Thyroid gland (tissue), 4 donors: ENCODE measurements at regions of chr16 and their contacts with region 1.

Region 1: GRCh38 chr16:48623304-48624016 is 13.5 kb upstream of the N4BP1 start:
- DNase-seq: peak; percentile 83 to 85
- H3K4me3 ChIP-seq: peak overlapping the region in 1 of 3 donors; percentile 19
- H3K27ac ChIP-seq: peak overlapping the region in 2 of 3 donors; percentile 63 to 76
- H3K4me1 ChIP-seq: peaks cover 5 to 15% of the 10 kb centered on the region in 2 donors
- H3K27me3 ChIP-seq: no peaks in the 10 kb centered on the region
- CTCF ChIP-seq: peak; percentile 87 to 100 (median 98)
- POLR2A ChIP-seq: peak in 1 of 2 donors; percentile 17

Region 2: DNA sequence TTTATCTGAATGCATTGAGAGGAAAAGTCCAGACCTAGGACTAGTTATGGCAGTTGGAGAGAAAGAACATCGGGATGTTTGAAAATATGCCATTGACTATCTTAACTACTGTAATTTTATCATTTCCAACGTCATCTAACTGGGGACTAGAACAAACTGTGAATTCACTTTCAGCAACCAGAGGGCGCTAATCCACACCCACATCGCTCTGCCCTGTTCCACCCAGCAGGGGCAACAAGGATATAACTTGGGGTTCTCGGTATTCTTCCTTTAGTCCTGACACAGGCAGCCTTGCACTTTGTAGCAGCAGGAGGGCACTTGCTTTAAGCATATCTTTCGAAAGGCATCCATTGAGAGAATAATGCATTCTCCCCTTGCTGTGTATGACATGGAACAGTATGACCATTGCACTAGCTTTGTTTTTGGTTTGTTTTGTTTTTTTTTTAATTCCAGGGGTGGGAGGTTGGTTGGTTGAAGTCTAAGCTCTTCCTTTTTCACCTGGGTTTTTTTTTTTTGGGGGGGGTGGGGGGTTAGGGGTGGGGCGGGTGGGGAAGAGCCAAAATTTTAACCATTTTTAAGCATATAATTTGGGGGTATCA is 269.8 kb before region 1 on chr16:
- intact Hi-C with region 1: loop called (anchors 5 kb)
- DNase-seq: peak; percentile 47 to 50
- H3K4me3 ChIP-seq: no peak overlapping the region
- H3K27ac ChIP-seq: no peak overlapping the region
- H3K4me1 ChIP-seq: no peaks in the 10 kb centered on the region
- H3K27me3 ChIP-seq: no peaks in the 10 kb centered on the region
- CTCF ChIP-seq: peak; percentile 64 to 97 (median 82)
- POLR2A ChIP-seq: no peak

Region 3: GRCh38 chr16:48542020-48542473 is 81.4 kb before region 1 on chr16:
- intact Hi-C with region 1: loop called (anchors 5 kb)
- DNase-seq: peak; percentile 69 to 74
- H3K4me3 ChIP-seq: no peak overlapping the region
- H3K27ac ChIP-seq: no peak overlapping the region
- H3K4me1 ChIP-seq: peaks cover 24 to 40% of the 10 kb centered on the region in 2 donors
- H3K27me3 ChIP-seq: no peaks in the 10 kb centered on the region
- CTCF ChIP-seq: peak; percentile 23 to 64 (median 48)
- POLR2A ChIP-seq: no peak